MCF 10A (cell line): ENCODE measurements at regions of chr9 and their contacts with region 1.

Region 1: DNA sequence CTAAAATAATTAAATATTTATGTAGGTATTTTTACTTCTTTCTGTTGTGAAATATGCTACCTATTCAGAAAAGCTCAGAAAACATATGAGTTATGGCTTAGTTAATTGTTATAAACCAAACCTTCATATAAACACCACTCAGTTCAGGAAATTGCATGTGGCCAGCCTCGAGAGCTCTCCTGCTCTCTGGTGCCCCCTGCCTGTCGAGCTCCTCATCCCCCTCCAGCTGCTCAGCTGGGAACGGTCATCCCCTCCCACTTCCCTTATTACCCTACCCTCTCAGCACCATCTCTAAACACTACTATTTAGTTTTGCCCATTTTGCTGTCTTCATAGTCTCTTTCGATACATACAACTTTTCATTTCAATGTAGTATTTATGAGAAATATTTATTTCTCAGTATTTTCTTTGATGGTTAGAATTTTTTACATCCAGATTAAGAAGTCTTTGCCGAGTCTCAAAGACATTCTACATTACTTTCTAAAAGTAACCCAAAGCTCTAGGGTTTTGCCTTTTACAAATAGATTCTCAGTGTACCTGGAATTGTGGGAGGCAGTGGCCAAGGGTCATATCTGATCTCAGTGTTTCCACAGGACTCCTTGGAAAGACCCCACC is 51.2 kb upstream of the SEMA4D start:
- DNase-seq: peak; percentile 74
- H3K4me3 Mint-ChIP-seq: no peak overlapping the region
- H3K27ac Mint-ChIP-seq: no peak overlapping the region
- H3K4me1 Mint-ChIP-seq: peaks cover 3% of the 10 kb centered on the region
- H3K27me3 Mint-ChIP-seq: no peaks in the 10 kb centered on the region
- CTCF ChIP-seq: peak; percentile 83

Region 2: DNA sequence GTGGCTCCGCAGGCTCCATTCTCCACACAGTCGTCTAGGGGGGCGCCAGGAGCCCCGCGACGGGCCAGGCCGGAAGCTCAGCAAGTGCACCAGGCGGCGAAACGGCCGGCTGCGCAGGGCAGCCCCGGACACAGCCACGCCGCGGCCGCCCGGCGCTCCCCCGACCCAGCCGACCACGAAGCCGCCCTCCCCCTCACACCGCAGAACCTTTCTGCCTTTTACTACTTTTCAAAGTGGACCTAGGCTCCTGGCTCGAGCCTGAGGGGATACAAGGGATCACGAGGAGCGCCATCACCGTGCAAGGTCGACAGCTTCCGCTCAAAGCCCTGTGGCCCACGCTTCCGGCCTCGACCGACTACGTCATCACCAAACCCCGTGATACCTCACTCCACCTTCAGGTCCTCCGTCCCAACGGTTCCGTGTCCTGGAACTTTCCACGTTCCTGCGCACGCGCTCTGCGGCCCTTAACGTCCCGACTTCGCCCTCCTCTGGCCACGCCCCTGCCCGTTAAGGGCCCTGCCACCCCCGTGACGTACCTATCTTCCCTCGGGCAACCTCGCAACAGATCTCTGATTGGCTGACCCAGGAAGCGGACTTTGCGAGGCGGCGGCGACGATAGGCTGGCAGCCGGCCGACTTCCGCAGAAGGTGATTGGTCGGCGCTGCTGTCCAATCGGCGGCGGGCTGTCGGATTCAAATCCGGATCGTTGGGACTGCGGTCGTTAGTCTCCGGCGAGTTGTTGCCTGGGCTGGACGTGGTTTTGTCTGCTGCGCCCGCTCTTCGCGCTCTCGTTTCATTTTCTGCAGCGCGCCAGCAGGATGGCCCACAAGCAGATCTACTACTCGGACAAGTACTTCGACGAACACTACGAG is 238.4 kb before region 1 on chr9 and contains the start of gene CKS2:
- CTCF ChIA-PET with region 1: interaction called, 10 read pairs
- POLR2A ChIA-PET with region 1: interaction called, 10 read pairs
- intact Hi-C with region 1: no loop called
- DNase-seq: peak; percentile 100
- H3K4me3 Mint-ChIP-seq: peak within 1 kb of the TSS; percentile 91
- H3K27ac Mint-ChIP-seq: peak within 1 kb of the TSS; percentile 100
- H3K4me1 Mint-ChIP-seq: peaks cover 10% of the 10 kb centered on the region
- H3K27me3 Mint-ChIP-seq: no peaks in the 10 kb centered on the region
- CTCF ChIP-seq: no peak
- total RNA-seq, gene CKS2: 82.2 and 90.4 TPM in 2 replicates

Region 3: DNA sequence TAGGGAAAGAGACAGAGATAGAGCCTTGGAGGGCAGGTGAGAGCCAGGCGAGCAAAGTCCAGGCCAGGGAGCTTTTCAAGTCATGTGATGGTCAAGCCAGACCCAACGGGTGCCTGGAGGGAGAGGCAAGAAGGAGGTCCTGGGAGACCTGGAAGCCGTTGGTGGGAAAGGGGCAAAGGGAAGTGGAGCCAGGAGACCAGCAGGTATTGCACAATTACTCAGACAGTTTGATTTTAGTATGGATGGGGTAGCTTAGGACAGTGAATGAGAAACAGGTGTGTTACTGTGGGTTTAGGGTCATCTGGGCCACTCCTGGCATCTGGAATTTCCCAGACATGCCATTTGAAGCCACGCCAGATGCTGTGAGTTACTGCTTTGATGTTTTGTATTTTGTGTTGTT is 225.7 kb before region 1 on chr9:
- CTCF ChIA-PET with region 1: interaction called, 33 read pairs
- POLR2A ChIA-PET with region 1: interaction called, 13 read pairs
- intact Hi-C with region 1: loop called (anchors 1 kb)
- DNase-seq: no peak
- H3K4me3 Mint-ChIP-seq: no peak overlapping the region
- H3K27ac Mint-ChIP-seq: peak overlapping the region; percentile 40
- H3K4me1 Mint-ChIP-seq: peaks cover 19% of the 10 kb centered on the region
- H3K27me3 Mint-ChIP-seq: no peaks in the 10 kb centered on the region
- CTCF ChIP-seq: no peak

Region 4: DNA sequence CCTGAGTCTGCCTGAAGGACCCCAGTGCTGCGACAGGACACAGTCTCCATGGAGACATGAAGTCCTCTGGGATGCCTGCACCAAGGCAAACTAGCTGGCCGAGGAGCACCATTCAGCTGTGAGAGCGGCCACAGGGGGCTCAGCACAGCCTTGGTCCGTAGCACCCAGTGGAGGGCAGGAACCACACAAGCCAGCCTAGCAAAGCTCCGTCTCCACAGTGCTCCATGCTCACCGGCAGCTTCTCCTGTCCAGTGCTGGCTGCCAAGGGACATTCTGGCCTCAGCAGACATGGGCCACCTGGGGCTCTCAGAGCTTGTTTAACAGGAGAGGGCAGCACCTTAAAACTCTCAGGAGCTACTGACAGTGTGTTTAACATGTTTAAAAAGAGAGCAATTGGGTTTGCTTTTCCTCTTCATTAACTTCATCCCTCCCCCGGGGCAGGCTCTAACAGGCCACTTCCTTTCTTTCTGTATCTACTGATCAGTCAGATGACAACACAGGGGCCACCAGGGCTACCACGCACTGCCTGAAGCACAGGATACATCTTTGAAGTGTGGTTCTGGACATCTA is 173.9 kb before region 1 on chr9:
- CTCF ChIA-PET with region 1: interaction called, 21 read pairs
- POLR2A ChIA-PET with region 1: no interaction called
- intact Hi-C with region 1: loop called (anchors 2 kb)
- DNase-seq: no peak
- H3K4me3 Mint-ChIP-seq: no peak overlapping the region
- H3K27ac Mint-ChIP-seq: no peak overlapping the region
- H3K4me1 Mint-ChIP-seq: no peaks in the 10 kb centered on the region
- H3K27me3 Mint-ChIP-seq: no peaks in the 10 kb centered on the region
- CTCF ChIP-seq: no peak

Region 5: DNA sequence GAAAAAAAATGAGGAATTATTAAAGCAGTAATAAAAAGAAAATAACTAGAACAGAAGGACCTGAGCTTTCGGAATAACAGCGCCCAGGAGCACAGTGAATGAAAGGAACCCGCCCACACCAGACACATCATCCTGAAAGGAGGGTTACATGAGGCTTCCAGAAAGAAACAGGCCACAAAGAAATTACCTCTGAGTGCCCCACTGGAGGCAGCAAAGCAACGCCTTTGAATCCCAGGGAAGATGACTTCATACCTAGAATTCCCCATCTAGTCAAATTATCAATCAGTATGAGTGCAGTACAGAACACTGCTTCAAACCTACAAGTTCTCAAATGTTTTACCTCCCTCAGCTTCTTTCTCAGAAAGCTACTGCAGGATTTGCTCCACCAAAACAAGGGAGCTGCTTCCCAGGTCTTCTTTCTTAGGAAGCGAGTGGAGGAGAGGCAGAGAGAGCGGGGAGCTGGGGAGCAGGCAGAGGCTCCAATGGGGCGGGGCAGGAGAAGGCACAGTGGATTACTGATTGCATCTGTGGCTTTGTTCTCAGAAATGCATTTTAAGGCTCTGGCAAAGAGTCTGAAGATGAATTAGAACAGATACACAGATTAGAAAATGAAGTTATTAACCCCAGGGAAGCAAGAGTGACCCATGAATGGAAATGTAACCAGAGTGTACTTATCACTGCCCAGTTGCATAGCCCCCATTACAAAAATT is 138.3 kb before region 1 on chr9:
- CTCF ChIA-PET with region 1: interaction called, 15 read pairs
- POLR2A ChIA-PET with region 1: no interaction called
- intact Hi-C with region 1: loop called (anchors 1 kb)
- DNase-seq: peak; percentile 38
- H3K4me3 Mint-ChIP-seq: no peak overlapping the region
- H3K27ac Mint-ChIP-seq: no peak overlapping the region
- H3K4me1 Mint-ChIP-seq: peaks cover 5% of the 10 kb centered on the region
- H3K27me3 Mint-ChIP-seq: no peaks in the 10 kb centered on the region
- CTCF ChIP-seq: no peak

Region 6: GRCh38 chr9:89533411-89534095 is 15.6 kb before region 1 on chr9:
- CTCF ChIA-PET with region 1: interaction called, 28 read pairs
- POLR2A ChIA-PET with region 1: no interaction called
- intact Hi-C with region 1: no loop called
- DNase-seq: no peak
- H3K4me3 Mint-ChIP-seq: no peak overlapping the region
- H3K27ac Mint-ChIP-seq: no peak overlapping the region
- H3K4me1 Mint-ChIP-seq: no peaks in the 10 kb centered on the region
- H3K27me3 Mint-ChIP-seq: peaks cover 4% of the 10 kb centered on the region
- CTCF ChIP-seq: no peak